ENCODE measurements at regions of chr18 and their contacts with region 1.

Region 1: DNA sequence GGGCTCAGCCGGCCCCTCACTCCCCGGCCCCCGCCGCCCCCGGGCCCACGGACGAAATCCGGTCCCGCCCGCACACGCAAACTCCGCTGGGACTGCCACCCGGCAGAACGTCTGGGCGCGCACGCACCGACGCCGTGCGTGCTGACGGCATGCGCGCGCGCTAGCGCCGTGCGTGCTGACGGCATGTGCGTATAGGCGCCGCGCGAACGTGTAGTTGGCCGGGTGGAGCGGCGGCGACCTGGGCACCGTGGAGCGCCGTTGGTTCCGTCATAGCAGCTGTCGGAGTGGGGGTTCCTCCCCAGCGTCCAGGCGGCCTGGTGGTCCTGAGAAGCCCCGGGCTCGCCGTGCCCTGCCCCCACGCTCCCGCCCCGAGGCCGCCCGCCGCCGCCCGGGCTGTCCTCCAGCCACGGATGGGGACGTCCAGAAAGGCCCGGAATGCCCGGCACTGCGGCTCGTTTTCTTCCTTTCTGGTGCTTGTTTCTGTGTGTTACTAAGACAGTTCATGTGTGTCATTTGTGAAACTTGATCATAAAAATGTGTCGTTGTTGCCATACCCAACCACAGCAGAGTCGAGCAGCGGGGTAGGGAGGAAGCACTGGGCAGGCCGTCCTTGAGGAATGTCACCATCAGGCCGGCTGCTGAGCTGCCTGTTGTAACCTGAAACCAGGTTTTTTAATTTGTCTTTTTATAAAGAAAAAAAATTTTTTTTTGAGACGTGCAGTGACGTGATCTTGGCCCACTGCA is at the start of gene TXNL4A:
- DNase-seq: peak; percentile 88
- ATAC-seq: peak; percentile 93
- H3K4me3 Mint-ChIP-seq: peak within 1 kb of the TSS; percentile 91
- H3K27ac Mint-ChIP-seq: peak within 1 kb of the TSS; percentile 93
- H3K4me1 Mint-ChIP-seq: peaks cover 34% of the 10 kb centered on the region
- H3K27me3 Mint-ChIP-seq: peaks cover 3% of the 10 kb centered on the region
- total RNA-seq, gene TXNL4A: 106 to 107 TPM

Region 2: GRCh38 chr18:79951578-79952455 is 36.8 kb before region 1 on chr18 and contains the start of gene SLC66A2:
- POLR2A ChIA-PET with region 1: interaction called, 15 read pairs
- DNase-seq: peak; percentile 99
- ATAC-seq: peak; percentile 89
- H3K4me3 Mint-ChIP-seq: peak within 1 kb of the TSS; percentile 87
- H3K27ac Mint-ChIP-seq: peak within 1 kb of the TSS; percentile 83
- H3K4me1 Mint-ChIP-seq: peaks cover 15% of the 10 kb centered on the region
- H3K27me3 Mint-ChIP-seq: peaks cover 2% of the 10 kb centered on the region
- total RNA-seq, gene SLC66A2: 29.0 to 29.2 TPM

Region 3: DNA sequence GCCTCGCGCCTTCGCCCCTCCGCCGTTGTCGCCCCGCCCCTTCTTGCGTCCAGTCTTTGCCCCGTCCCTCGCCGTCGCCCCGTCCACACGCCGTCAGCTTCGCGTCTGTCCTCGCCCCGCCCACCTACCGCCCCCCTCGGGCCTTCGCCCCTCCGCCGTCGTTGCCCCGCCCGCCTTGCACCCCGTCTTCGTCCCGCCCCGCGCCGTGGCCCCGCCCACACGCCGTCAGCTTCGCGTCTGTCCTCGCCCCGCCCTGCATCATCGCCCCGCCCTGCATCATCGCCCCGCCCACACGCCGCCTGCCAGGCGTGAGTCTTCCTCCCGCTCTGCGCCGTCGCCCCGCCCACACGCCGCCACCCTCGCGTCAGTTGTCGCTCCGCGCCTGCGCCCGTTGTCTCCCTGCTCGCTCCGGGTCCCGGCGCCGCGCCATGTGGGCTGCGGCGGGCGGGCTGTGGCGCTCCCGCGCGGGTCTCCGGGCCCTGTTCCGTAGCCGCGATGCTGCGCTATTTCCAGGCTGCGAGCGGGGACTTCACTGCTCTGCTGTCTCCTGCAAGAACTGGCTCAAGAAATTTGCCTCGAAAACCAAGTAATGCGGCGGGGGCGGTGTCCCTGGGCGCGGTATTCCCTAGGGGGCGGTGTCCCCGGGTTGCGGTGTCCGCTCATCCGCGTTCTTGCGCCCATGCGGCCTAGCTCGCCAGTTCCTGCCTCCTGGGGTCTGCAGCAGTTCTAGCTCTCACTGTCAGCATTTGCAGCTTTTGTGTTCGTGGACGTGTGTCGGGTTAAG is 45.6 kb after region 1 on chr18 and contains the start of gene RBFA:
- POLR2A ChIA-PET with region 1: interaction called, 15 read pairs
- DNase-seq: peak; percentile 100
- ATAC-seq: peak; percentile 84
- H3K4me3 Mint-ChIP-seq: peak within 1 kb of the TSS; percentile 86
- H3K27ac Mint-ChIP-seq: peak within 1 kb of the TSS; percentile 89
- H3K4me1 Mint-ChIP-seq: peaks cover 18% of the 10 kb centered on the region
- H3K27me3 Mint-ChIP-seq: peaks cover 2% of the 10 kb centered on the region
- total RNA-seq, gene RBFA: 21.2 to 22.1 TPM